ENCODE measurements at regions of chr11 and their contacts with region 1.

Region 1: GRCh38 chr11:102831489-102832440 is 11.6 kb downstream of the MMP3 start:
- DNase-seq: peak in 1 of 2 experiments; percentile 71
- H3K4me3 ChIP-seq: peak overlapping the region in 2 of 4 experiments; percentile 10 to 34; a peak in 2 of 8 replicates
- H3K27ac ChIP-seq: no peak overlapping the region
- H3K4me1 ChIP-seq: peaks cover 0 to 7% (median 1%) of the 10 kb centered on the region in 4 experiments; a peak in 4 of 7 replicates
- H3K27me3 ChIP-seq: no peaks in the 10 kb centered on the region; a peak in 2 of 7 replicates
- CTCF ChIP-seq: peak; percentile 52 to 79 (median 64)
- EP300 ChIP-seq: no peak
- POLR2A ChIP-seq: no peak
- RAD21 ChIP-seq: peak; percentile 84

Region 2: DNA sequence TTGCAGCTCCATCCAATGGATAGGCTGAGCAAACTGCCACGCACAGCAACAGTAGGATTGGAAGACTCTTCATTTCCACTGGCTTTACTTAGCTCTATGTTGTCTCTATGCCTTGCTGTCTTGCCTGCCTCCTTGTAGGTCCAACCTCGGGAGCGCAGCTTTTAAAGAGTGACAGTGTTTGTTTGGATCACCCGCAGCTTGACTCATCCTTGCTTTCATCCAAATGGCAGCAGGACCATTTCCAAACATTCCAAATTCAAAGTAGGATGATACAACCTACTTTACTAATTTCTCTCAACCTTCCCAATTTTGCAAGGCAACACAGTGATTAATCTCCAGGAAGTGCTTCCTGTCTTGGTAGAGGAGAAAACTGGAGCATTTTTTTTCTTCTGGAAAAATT is 11.7 kb after region 1 on chr11 and contains the start of gene MMP3:
- CTCF ChIA-PET with region 1: interaction called, 12 read pairs
- POLR2A ChIA-PET with region 1: no interaction called
- DNase-seq: no peak
- H3K4me3 ChIP-seq: no peak within 1 kb of the TSS
- H3K27ac ChIP-seq: no peak within 1 kb of the TSS
- H3K4me1 ChIP-seq: no peaks in the 10 kb centered on the region
- H3K27me3 ChIP-seq: no peaks in the 10 kb centered on the region
- CTCF ChIP-seq: no peak
- EP300 ChIP-seq: no peak
- POLR2A ChIP-seq: no peak
- RAD21 ChIP-seq: no peak
- total RNA-seq, gene MMP3: not detected in 2 replicates

Measured in H1 (cell line).